ENCODE measurements at regions of chr7 and their contacts with region 1.

Region 1: GRCh38 chr7:116443101-116443523 is 56.4 kb upstream of the CAV2 start:
- DNase-seq: no peak
- H3K4me3 ChIP-seq: no peak overlapping the region
- H3K27ac ChIP-seq: no peak overlapping the region
- H3K4me1 ChIP-seq: no peaks in the 10 kb centered on the region
- H3K27me3 ChIP-seq: no peaks in the 10 kb centered on the region
- CTCF ChIP-seq: no peak

Region 2: DNA sequence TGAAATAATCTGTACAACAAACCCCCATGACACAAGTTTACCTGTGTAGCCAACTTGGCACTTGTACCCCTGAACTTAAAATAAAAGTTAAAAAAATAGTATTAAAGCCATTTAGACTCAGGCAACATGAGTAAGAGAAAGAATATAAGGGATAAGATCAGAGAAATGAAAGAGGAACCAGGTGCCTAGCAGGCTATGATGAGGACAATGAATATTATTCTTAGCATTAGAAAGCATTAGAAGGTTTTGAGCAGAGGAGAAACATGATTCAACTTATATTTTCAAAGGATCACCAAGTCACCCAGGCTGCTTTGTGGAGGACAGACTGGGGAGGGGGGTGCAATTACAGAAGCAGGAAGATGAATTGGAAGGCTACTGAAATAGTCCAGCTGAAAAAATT is 280.9 kb before region 1 on chr7:
- intact Hi-C with region 1: no loop called
- DNase-seq: no peak
- H3K4me3 ChIP-seq: no peak overlapping the region
- H3K27ac ChIP-seq: no peak overlapping the region
- H3K4me1 ChIP-seq: no peaks in the 10 kb centered on the region
- H3K27me3 ChIP-seq: no peaks in the 10 kb centered on the region
- CTCF ChIP-seq: no peak

Region 3: DNA sequence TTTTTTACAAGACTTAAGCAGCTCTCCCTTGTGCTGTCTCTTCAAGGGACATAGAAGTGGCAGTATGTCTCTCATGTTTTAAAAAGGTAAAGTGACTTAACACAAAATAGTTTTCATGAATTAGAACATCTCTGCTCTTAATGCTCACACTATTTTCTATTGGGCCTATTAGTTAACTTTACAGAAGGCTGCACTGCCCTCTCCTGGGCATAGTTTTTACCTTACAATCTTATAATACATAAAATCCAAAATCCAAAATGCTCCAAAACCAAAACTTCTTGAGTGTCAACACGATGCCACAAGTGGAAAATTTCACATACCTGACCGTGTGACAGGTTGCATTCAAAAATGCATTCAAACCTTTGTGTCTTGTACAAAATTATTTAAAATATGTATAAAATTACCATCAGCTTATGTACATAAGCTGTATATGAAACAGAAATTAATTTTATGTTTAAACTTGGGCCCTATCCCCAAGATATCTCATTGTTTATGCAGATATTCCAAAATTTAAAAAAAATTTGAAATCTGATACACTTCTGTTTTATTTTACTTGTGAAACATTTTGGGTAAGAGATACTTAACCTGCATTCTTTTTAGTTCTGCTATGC is 207.0 kb before region 1 on chr7:
- intact Hi-C with region 1: no loop called
- DNase-seq: peak; percentile 46
- H3K4me3 ChIP-seq: no peak overlapping the region
- H3K27ac ChIP-seq: no peak overlapping the region
- H3K4me1 ChIP-seq: peaks cover 8% of the 10 kb centered on the region
- H3K27me3 ChIP-seq: no peaks in the 10 kb centered on the region
- CTCF ChIP-seq: peak; percentile 45

Region 4: GRCh38 chr7:116399819-116400218 is 43.3 kb before region 1 on chr7:
- intact Hi-C with region 1: no loop called
- DNase-seq: no peak
- H3K4me3 ChIP-seq: no peak overlapping the region
- H3K27ac ChIP-seq: no peak overlapping the region
- H3K4me1 ChIP-seq: no peaks in the 10 kb centered on the region
- H3K27me3 ChIP-seq: no peaks in the 10 kb centered on the region
- CTCF ChIP-seq: no peak

Region 5: GRCh38 chr7:116525913-116526861 is 83.1 kb after region 1 on chr7:
- intact Hi-C with region 1: loop called (anchors 5 kb)
- DNase-seq: peak; percentile 76
- H3K4me3 ChIP-seq: peak overlapping the region; percentile 51
- H3K27ac ChIP-seq: peak overlapping the region; percentile 68
- H3K4me1 ChIP-seq: peaks cover 9% of the 10 kb centered on the region
- H3K27me3 ChIP-seq: peaks cover 23% of the 10 kb centered on the region
- CTCF ChIP-seq: peak; percentile 81

Region 6: DNA sequence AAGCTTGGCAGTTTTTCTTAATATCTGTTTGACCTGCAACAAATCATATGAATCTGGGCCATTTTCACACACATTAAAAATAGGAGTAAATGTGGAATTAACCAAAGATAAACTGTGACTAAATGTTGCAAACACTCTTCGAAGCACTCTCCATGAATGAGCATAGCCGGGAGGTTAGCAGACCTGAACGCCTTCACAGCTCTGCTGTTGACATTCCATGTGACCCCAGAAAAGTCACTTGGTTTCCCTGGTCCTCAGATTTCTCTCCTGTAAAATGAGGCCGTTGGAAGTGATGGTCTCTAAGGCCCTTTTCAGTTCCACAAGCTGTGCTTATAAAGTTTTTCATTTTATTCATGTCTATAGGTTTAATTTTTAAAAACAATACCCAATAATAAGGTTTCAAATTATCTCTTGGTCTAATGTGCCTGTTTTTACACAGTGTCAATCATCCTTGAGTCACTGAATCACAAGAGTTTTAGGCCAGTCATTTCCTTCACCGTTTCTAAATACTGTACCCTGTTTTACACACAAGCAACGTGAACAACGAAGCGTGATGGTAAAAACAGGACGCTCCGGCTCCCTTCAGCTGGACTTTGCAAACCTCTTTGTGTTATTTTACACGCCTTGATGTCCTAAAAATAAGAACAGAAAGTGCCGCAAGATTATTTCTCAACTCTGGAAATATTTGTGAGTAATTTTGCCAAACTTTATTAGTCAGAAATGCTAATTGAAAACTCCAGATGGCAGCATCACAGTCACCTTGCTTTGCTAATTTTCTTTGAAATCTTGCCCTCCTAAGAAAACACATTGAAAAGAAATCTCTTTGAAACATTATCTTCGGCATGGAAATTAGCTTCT is 190.2 kb after region 1 on chr7:
- intact Hi-C with region 1: no loop called
- DNase-seq: no peak
- H3K4me3 ChIP-seq: no peak overlapping the region
- H3K27ac ChIP-seq: no peak overlapping the region
- H3K4me1 ChIP-seq: no peaks in the 10 kb centered on the region
- H3K27me3 ChIP-seq: no peaks in the 10 kb centered on the region
- CTCF ChIP-seq: no peak